ENCODE measurements at regions of chr14 and their contacts with region 1.

Region 1: GRCh38 chr14:93115069-93115820 is 480 bp downstream of the ITPK1 start:
- DNase-seq: peak in 1 of 2 experiments; percentile 84
- H3K4me3 ChIP-seq: peak overlapping the region; percentile 77 to 100 (median 88)
- H3K27ac ChIP-seq: no peak overlapping the region; the same call in 1 of the 2 replicates
- H3K4me1 ChIP-seq: peaks cover 10 to 17% (median 12%) of the 10 kb centered on the region in 4 experiments
- H3K27me3 ChIP-seq: no peaks in the 10 kb centered on the region
- CTCF ChIP-seq: no peak
- EP300 ChIP-seq: no peak
- POLR2A ChIP-seq: no peak
- RAD21 ChIP-seq: no peak

Region 2: DNA sequence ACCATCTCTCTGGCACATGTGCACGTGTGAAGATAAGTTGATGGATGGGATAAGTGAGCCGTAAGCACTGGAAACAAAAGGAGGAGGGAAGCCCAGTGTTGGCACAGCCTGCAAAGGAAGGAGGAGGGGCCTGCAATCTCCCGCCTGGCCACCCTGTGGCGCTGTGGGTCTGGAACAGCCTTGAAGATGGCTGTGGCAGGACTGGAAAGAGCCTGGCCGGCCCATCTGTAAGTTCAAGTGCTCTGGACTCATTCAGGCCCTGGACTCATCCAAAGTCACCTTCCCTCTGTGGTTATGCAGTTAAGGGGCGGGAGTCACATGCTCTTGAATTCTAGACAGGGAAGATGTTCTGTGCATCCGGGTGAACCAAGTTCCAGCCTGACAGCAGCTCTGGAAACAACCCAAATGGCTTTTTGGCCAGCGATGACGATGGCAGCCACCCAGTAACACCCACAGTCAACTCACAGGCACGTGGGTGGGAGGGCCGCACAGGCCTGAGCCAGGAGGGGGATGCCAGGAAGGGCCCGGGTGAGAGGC is 141.9 kb before region 1 on chr14:
- CTCF ChIA-PET with region 1: interaction called, 34 read pairs
- POLR2A ChIA-PET with region 1: no interaction called
- DNase-seq: peak; percentile 73 to 100
- H3K4me3 ChIP-seq: no peak overlapping the region
- H3K27ac ChIP-seq: no peak overlapping the region
- H3K4me1 ChIP-seq: peaks cover 0 to 16% (median 8%) of the 10 kb centered on the region in 4 experiments; a peak in 5 of 7 replicates
- H3K27me3 ChIP-seq: no peaks in the 10 kb centered on the region
- CTCF ChIP-seq: peak; percentile 92 to 98 (median 98)
- EP300 ChIP-seq: peak in 1 of 2 experiments; percentile 95; a peak in 1 of 3 replicates
- POLR2A ChIP-seq: no peak
- RAD21 ChIP-seq: peak; percentile 92 to 93

Region 3: DNA sequence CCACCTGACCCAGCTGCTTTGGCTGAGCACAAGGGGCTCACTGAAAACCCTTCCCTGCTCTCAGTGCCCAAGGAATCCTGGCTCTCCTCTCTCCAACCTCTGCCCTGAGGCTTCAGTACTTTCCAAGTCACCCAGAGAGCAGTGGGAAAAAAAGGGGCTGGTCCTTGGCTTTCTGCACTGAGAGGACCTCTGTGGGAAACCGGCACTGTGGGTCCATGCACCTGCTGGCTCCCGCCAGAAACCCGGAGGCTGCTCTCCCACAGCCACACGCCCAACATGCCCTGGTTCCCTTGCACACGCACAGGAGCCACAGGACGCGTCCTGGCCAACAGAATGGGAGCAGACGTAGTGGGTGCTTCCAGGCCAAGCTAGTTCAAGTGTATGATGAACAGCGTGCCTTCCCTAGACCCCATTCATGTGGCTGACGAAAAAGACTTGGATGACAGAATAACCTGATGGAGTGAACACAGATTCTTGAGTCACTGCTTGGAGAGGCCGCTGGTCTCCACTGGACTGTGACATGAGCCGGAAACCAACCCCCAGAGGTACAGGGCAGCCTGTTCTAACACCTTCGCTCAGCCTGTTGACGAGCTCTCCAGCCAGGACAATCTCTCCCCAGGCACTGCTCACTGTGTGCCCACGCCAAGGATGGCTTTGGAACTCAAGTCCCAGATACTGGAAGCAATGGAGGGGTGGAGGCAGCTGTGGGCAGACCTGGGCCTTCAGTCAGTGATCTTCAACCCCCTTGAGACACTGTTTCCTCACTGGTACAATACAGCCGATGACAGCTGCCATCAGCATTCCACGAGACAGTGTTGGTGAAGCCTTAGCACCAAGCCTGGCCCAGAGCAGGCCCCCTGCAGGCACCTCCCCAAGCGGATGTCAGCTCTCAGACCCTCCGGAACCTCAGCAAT is 87.2 kb before region 1 on chr14:
- CTCF ChIA-PET with region 1: interaction called, 17 read pairs
- POLR2A ChIA-PET with region 1: interaction called, 3 read pairs
- DNase-seq: no peak
- H3K4me3 ChIP-seq: no peak overlapping the region
- H3K27ac ChIP-seq: peak overlapping the region; percentile 4; the same call in 1 of the 2 replicates
- H3K4me1 ChIP-seq: peaks cover 4 to 24% (median 12%) of the 10 kb centered on the region in 4 experiments
- H3K27me3 ChIP-seq: no peaks in the 10 kb centered on the region
- CTCF ChIP-seq: no peak
- EP300 ChIP-seq: no peak
- POLR2A ChIP-seq: no peak
- RAD21 ChIP-seq: no peak

Region 4: GRCh38 chr14:93049867-93050331 is 65.3 kb before region 1 on chr14:
- CTCF ChIA-PET with region 1: interaction called, 16 read pairs
- POLR2A ChIA-PET with region 1: no interaction called
- DNase-seq: no peak
- H3K4me3 ChIP-seq: no peak overlapping the region
- H3K27ac ChIP-seq: no peak overlapping the region
- H3K4me1 ChIP-seq: peaks cover 9 to 54% (median 42%) of the 10 kb centered on the region in 4 experiments
- H3K27me3 ChIP-seq: no peaks in the 10 kb centered on the region
- CTCF ChIP-seq: no peak
- EP300 ChIP-seq: no peak
- POLR2A ChIP-seq: no peak
- RAD21 ChIP-seq: no peak

Region 5: DNA sequence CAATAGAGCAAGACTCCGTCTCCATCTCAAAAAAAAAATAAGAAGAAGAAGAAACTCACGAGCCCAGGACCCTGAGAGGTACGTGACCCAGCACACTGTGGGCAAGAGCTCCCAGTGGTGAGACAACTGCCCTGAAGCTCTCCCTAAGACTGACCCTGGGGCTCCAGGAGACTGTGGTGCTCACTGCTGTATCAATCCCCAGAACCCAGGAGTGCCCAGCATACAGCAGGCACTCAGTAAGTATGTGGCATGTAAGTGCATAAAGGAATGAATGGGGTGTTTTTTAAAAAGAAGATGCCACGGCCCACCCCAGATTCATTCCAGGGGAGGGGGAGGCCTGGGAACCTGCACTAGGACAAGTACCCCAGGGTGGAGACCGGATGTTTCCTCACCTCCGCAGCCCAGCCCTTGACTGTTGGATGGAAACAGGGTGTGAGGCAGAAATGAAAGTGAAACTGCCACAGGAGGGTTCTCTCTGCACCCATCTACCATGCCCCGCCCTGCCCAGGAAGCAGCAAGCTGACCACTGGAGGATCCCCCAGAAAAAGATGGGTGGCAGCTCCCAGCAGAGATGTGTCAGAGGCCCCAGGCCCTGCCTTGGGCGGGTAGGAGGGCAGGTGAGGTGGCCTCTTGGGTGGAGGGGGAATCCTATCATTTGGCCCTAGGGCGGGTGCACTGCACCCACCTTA is 11.7 kb before region 1 on chr14:
- CTCF ChIA-PET with region 1: interaction called, 128 read pairs
- POLR2A ChIA-PET with region 1: interaction called, 5 read pairs
- DNase-seq: no peak
- H3K4me3 ChIP-seq: no peak overlapping the region
- H3K27ac ChIP-seq: no peak overlapping the region
- H3K4me1 ChIP-seq: peaks cover 3 to 17% (median 10%) of the 10 kb centered on the region in 4 experiments
- H3K27me3 ChIP-seq: no peaks in the 10 kb centered on the region
- CTCF ChIP-seq: no peak
- EP300 ChIP-seq: no peak
- POLR2A ChIP-seq: no peak
- RAD21 ChIP-seq: no peak

Region 6: DNA sequence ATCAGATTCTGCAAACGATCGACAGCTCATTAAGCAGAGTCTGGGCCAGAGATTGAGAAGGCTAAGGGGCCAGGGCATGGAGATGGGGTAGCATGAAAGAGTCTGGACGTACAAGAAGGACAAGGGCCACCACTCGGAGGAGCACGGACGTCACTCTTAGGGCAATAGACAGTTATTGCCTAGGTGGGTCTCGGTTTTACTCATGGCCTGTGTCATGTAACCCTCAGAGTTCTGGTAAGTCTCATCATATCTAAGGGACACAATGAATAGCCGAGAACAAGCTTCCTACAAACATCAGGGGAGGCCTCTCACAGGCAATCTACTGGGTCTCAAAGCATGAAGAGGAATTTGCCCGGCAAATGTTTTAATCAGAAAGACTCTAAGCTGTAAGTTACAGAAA is 30.9 kb after region 1 on chr14:
- CTCF ChIA-PET with region 1: interaction called, 68 read pairs
- POLR2A ChIA-PET with region 1: interaction called, 3 read pairs
- DNase-seq: no peak
- H3K4me3 ChIP-seq: no peak overlapping the region
- H3K27ac ChIP-seq: no peak overlapping the region
- H3K4me1 ChIP-seq: 0 out of 7 replicates have a peak, but pooled peaks cover 0 to 3% (median 0%) of the 10 kb centered on the region in 4 experiments
- H3K27me3 ChIP-seq: no peaks in the 10 kb centered on the region; a peak in 1 of 7 replicates
- CTCF ChIP-seq: no peak
- EP300 ChIP-seq: no peak
- POLR2A ChIP-seq: no peak
- RAD21 ChIP-seq: no peak

Region 7: DNA sequence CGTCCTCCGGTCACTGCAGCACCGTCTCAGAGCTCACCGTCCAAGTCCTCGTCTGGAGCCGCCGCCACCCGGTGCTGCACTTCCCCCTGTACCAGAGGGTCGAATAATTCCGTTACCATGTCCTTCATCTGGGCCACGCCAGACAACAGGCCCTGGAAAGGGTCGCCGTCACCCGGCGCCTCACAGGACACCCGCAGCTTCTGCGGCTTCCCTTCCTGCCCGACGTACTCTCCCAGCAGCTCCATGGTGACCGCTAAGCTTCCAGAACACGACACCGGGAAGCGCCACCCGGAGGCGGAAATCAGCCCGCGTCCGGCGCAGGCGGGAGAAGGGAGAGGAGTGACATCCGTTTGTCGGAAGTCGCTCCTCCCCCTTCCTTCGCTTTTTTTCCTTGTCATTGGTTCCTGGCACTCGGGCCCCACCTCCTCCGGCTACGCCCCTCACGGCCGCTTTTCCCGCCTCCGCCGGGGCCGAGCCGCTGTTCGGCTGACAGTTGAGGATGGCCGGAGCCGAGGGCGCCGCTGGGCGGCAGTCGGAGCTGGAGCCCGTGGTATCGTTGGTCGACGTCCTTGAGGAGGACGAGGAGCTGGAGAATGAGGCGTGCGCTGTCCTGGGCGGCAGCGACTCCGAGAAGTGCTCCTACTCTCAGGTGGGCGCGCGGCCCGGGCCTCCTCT is 91.7 kb after region 1 on chr14 and contains the starts of genes GON7 and UBR7:
- CTCF ChIA-PET with region 1: interaction called, 12 read pairs
- POLR2A ChIA-PET with region 1: no interaction called
- DNase-seq: peak; percentile 91 to 95
- H3K4me3 ChIP-seq: peak within 1 kb of the TSS; percentile 77 to 99 (median 93)
- H3K27ac ChIP-seq: peak within 1 kb of the TSS; percentile 65
- H3K4me1 ChIP-seq: peaks cover 0 to 6% (median 4%) of the 10 kb centered on the region in 4 experiments; a peak in 3 of 7 replicates
- H3K27me3 ChIP-seq: no peaks in the 10 kb centered on the region
- CTCF ChIP-seq: peak; percentile 19 to 33 (median 29); a peak in 3 of 4 replicates
- EP300 ChIP-seq: no peak
- POLR2A ChIP-seq: peak; percentile 52 to 75
- RAD21 ChIP-seq: 0 out of 4 replicates have a peak, but pooled peaks of 1 of the 2 experiments have one; percentile 8
- total RNA-seq, gene GON7: 8.8 and 9.9 TPM in 2 replicates
- total RNA-seq, gene UBR7: 28.4 and 29.4 TPM in 2 replicates